ENCODE measurements at regions of chr14 and their contacts with region 1.

Region 1: GRCh38 chr14:59189786-59190771 is 1.6 kb downstream of the DAAM1 start:
- DNase-seq: peak; percentile 77
- H3K4me3 Mint-ChIP-seq: peak overlapping the region; percentile 91
- H3K27ac Mint-ChIP-seq: no peak overlapping the region
- H3K4me1 Mint-ChIP-seq: peaks cover 13% of the 10 kb centered on the region
- H3K27me3 Mint-ChIP-seq: no peaks in the 10 kb centered on the region

Region 2: DNA sequence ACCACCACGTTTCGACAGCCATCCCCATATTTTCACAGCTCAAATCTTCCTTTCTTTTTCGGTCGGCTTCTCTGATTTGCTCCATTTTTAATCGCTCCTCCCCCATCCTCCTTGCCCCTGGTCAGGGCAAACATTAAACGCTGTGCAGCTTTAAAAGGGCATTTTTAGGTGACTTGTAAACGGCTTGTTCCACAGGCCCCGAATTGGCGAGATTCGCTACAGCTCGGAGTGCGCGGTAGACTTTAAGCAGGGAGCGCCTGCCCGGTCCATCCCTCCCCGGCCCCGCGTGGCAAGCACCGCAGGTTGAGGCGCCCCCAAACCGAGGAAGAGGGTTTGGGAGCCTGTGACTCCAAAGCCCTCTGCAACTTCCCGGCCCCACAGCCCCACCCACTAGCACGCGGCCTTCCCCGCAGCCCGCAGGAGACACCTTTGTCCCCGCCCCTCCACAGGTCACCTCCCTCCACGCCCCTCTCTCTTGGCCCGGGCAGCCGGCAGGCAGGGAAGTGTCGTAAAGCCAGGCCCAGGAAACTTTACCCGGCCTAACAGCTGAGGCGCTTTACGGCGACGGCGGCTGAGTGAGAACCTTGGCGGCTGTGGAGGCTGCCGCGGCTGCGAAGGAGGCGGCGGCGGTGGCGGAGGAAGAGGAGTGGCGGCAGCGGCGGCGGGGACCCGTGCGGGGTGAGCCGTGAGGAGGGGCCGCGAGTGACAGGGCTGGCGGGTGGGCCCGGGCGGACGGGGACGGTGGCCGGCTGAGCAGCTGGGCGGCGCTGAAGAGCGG is 1799.9 kb before region 1 on chr14 and contains the start of gene NAA30:
- CTCF ChIA-PET with region 1: no interaction called
- intact Hi-C with region 1: loop called (anchors 2 kb)
- DNase-seq: peak; percentile 95
- H3K4me3 Mint-ChIP-seq: peak within 1 kb of the TSS; percentile 89
- H3K27ac Mint-ChIP-seq: peak within 1 kb of the TSS; percentile 93
- H3K4me1 Mint-ChIP-seq: peaks cover 35% of the 10 kb centered on the region
- H3K27me3 Mint-ChIP-seq: no peaks in the 10 kb centered on the region
- total RNA-seq, gene NAA30: 12.3 to 12.5 TPM

Region 3: DNA sequence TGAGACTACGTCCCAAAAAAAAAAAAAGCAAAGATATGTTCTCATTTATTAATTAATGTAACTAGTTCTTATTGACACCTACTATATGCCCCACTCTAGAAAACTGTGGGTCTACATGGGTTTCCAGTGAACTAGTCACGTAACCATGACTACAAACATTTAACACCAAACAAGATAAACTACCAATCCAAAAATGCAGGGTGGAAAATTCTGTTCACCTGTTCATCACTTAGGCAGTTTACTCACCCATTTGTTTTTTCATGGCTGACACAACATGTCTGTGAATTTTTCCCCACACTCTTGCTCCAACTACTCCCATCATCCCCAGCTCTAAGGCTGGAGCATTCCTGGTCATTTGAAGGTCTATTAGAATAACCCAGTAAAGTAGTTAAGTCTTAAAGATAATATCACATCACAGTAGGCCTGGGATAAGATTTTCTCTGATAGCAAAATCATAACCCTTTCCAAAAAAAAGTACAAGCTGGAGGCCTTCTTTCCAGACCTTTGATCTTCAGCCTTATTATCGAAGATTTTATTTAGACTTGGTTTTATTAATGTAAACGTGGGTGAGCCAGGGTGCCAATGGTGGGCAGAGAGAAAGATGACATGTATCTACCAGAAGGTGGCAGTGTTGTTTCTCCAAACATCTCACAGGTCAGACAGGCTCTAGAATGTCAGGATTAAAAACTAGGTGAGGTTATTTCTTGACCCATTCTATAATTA is 63.2 kb before region 1 on chr14:
- CTCF ChIA-PET with region 1: interaction called, 3 read pairs
- intact Hi-C with region 1: loop called (anchors 2 kb)
- DNase-seq: peak; percentile 24
- H3K4me3 Mint-ChIP-seq: no peak overlapping the region
- H3K27ac Mint-ChIP-seq: no peak overlapping the region
- H3K4me1 Mint-ChIP-seq: no peaks in the 10 kb centered on the region
- H3K27me3 Mint-ChIP-seq: peaks cover 7% of the 10 kb centered on the region

Region 4: DNA sequence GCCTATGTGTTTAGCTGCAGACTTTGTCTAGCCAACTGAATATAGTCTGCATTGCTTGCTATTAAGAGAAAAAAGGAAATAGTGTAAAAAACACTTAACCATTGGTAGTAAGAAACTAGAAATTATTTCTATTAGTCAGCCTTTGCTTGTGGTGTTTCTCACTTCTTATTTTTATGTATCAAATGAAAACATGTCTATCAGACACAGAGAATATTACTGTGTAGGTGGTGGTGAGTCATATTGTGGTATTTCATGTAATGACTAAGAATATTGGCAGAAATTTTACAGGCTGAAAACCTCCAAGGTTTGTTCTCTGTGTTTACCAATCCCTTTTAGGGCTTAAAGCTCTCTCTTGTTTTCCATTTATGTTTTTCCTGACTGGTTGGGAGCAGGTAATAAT is 85.6 kb after region 1 on chr14:
- CTCF ChIA-PET with region 1: no interaction called
- intact Hi-C with region 1: loop called (anchors 1 kb)
- DNase-seq: no peak
- H3K4me3 Mint-ChIP-seq: no peak overlapping the region
- H3K27ac Mint-ChIP-seq: no peak overlapping the region
- H3K4me1 Mint-ChIP-seq: peaks cover 19% of the 10 kb centered on the region
- H3K27me3 Mint-ChIP-seq: no peaks in the 10 kb centered on the region

Region 5: DNA sequence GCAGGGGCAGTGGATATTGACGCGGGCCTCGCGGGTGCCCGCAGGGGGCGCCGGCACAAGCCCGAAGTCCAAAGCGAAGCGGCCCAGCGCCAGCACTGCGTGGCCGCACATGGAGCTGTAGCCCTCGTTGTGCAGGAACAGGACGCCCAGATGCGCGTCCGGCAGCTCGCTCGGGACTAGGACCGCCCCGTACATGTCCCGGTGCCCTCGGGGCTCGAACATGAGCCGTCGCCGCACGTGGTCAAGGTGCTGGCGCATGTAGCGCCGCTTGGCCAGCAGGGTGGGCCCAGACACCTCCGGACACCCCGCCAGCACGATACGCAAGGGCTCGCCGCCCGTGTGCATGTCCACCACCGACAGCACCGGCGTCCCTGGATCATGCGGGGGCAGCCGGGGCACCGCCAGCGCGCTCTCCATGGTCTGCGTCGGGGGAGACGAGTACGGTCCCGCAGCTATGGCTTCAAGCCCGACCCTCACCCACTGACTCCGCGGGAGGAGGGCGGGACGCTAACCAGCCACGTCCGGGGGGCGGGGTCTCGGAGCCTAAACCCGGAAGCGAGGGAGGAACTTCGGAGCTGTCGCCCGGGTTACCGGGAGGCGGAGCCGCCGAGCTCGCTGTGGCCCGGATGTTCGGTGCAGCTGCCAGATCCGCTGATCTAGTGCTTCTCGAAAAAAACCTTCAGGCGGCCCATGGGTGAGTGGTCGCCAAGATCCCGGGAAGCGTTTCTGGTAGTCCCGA is 294.0 kb after region 1 on chr14 and contains the starts of genes JKAMP and L3HYPDH:
- CTCF ChIA-PET with region 1: no interaction called
- intact Hi-C with region 1: loop called (anchors 1 kb)
- DNase-seq: peak; percentile 98
- H3K4me3 Mint-ChIP-seq: peak within 1 kb of the TSS; percentile 91
- H3K27ac Mint-ChIP-seq: peak within 1 kb of the TSS; percentile 83
- H3K4me1 Mint-ChIP-seq: peaks cover 49% of the 10 kb centered on the region
- H3K27me3 Mint-ChIP-seq: no peaks in the 10 kb centered on the region
- total RNA-seq, gene JKAMP: 15.2 to 15.6 TPM
- total RNA-seq, gene L3HYPDH: 7.0 to 7.6 TPM

Region 6: DNA sequence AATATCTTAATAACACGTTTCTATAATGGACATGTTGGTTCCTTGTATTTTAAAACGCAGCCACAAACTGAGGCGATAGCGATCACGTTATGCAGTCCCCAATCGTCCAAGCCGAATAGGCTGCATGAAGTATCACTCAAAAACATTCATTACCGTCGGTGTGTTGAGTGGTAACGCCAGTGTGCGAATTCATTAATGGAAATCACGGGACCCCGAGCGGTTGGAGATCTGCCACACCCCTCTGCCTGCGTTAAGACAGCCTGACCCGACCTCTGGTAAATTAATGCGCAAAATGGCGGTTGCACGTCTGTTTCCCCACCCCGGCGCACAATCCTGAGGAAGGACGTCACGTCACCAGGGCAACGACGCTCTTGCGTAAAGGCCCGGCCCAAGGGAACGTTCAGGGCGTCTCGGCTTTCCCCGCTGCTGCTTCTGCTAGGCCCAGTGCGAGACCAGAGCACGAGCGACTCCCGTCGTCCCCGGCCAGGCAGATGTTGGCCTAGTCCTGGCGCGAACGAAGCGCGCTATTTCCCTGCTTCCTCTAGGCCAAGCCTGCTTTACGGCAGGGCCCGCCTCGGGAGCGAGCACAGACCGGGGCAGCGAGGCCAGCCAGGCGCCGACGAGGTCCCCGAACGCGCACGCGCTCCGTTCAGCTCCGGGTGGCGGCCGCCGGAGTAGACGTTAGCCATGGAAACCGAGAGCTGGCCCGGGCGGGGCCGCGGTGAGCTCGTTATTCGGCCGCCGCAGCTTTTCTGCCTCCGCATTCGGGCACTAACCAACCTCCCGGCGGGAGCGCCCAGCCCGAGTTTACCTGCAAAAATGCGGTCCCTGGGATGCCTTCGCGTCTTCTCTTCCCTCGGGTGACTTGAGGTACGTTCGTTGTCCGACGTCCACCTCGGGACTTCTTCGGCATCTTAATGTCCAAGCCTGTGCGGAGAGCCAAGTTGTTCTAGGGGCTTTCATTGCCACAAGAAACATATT is 901.8 kb after region 1 on chr14 and contains the start of gene PCNX4:
- CTCF ChIA-PET with region 1: no interaction called
- intact Hi-C with region 1: loop called (anchors 1 kb)
- DNase-seq: peak; percentile 95
- H3K4me3 Mint-ChIP-seq: peak within 1 kb of the TSS; percentile 98
- H3K27ac Mint-ChIP-seq: peak within 1 kb of the TSS; percentile 95
- H3K4me1 Mint-ChIP-seq: peaks cover 34% of the 10 kb centered on the region
- H3K27me3 Mint-ChIP-seq: peaks cover 9% of the 10 kb centered on the region
- total RNA-seq, gene PCNX4: 24.9 to 27.5 TPM